MCF 10A (cell line): ENCODE measurements at regions of chr16 and their contacts with region 1.

Region 1: DNA sequence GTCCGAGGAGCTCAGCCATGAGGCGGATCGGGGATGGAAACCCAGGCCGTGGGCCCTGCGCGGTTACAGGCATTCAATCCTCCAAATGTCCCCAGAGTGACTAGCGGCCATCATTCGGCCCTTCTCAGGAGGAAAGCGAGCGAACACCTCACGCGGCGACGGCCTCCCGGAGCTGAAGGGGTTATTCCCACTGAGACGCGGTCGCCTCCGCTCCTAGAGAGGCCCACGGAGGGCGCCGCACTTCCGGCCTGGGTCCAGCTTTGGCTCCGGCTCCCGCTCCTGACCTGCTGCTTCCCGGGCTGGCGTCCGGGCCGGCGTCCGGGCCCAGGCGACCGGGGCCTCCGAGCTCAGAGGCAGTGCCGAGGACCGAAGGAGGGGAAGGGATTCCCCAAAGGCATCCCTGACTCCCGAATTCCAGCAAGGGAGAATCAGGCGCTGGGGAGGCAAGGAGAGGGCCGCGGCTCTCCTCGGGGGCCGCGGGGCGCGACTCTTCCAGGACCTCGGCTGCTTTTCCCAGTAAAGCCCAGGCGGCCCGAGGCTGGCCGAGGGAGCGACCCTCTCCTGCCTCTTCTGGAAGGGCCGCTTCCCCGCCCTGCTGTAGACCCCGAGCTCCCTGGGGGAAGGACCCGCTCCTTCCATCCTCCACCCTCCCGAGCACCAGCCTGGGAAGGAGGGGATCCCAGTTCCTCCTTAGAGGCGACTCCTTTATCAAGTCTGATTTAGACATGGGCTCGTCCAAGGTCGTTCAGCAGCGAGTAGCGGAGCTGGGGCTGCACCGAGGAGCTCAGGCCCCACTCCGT is 18.6 kb upstream of the ZNF629 start:
- DNase-seq: peak; percentile 81
- H3K4me3 Mint-ChIP-seq: peak overlapping the region; percentile 85
- H3K27ac Mint-ChIP-seq: peak overlapping the region; percentile 82
- H3K4me1 Mint-ChIP-seq: peaks cover 10% of the 10 kb centered on the region
- H3K27me3 Mint-ChIP-seq: no peaks in the 10 kb centered on the region
- CTCF ChIP-seq: no peak

Region 2: DNA sequence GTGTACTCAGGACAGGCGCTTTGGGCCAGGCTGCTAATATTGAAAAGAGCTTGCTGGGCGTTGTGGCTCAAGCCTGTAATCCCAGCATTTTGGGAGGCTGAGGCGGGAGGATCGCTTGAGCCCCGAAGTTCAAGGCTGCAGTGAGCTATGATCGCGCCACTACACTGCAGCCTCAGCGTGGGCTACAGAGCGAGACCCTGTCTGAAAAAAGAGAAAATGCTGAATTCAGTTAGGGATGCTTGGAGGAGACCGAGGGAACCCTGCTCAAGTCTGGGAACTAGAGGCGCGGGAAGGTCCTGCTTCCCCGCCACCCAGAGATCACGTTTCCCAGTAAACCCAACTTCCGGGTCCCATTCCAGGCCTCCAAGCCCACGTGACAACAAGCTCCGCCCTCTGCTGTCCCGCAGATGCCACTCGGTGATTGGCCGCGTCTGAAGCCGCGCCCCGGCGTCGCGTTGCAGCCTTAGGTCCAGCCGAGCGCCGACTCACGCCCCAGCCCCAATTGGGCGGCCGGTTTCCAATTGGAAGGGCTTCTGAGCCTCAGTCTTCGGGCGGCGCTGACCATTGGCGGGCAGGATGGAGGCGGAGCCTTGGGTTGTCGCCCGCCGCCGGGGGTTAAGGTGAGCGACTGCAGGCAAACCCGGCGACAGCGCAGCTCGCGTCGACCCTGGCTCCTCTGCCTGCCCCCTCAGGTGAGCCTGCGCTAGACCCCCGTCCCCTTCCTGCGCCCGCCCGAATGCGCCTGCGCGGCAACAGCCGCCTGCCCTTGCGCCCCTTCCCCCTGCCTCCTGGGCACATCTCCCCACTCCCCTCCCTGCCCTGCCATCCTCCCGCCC is 57.6 kb before region 1 on chr16 and contains the start of gene PHKG2:
- CTCF ChIA-PET with region 1: no interaction called
- POLR2A ChIA-PET with region 1: interaction called, 17 read pairs
- intact Hi-C with region 1: no loop called
- DNase-seq: peak; percentile 99
- H3K4me3 Mint-ChIP-seq: peak within 1 kb of the TSS; percentile 87
- H3K27ac Mint-ChIP-seq: peak within 1 kb of the TSS; percentile 86
- H3K4me1 Mint-ChIP-seq: peaks cover 30% of the 10 kb centered on the region
- H3K27me3 Mint-ChIP-seq: no peaks in the 10 kb centered on the region
- CTCF ChIP-seq: no peak
- total RNA-seq, gene PHKG2: 28.0 and 28.4 TPM in 2 replicates

Region 3: DNA sequence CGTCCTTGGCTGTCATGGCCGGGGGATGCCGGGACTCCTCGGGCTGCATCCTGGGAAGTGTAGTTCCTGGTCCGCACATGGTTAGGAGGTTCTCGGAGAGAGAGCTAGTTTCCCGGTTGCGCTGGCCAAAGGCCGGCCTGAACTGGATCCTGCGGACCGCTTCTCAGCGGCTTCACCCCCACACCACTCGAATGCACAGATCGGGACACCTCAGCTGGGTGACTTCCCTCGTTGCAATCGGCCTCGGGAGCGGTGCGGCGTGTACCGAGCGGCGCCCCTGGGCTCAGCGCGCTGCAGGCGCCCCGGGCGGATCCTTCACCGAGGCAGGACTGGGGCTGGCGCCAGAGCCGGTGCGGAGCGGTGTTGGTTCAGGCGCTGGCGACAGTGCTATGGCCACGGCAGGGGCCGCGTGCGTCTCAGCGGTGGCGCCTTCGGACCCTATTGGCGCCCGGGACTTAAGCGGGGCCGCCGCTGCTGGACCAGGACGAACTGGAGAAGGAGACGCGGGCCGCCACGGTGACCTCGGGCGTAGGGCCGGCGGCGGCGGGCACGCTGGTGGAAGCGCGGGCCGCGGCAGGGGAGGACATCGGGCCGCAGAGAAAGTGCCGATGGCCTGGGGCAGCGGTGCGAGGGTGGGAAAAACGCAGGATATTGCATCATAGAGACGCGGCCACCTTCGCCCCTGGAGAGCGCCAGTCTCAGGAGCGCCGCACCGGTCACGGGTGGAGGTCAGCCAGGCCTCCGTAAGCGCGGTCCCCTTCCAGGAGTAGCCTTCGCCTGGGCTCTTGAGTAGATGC is 30.0 kb before region 1 on chr16:
- CTCF ChIA-PET with region 1: interaction called, 4 read pairs
- POLR2A ChIA-PET with region 1: interaction called, 11 read pairs
- intact Hi-C with region 1: loop called (anchors 5 kb)
- DNase-seq: peak; percentile 87
- H3K4me3 Mint-ChIP-seq: peak overlapping the region; percentile 85
- H3K27ac Mint-ChIP-seq: peak overlapping the region; percentile 82
- H3K4me1 Mint-ChIP-seq: peaks cover 22% of the 10 kb centered on the region
- H3K27me3 Mint-ChIP-seq: no peaks in the 10 kb centered on the region
- CTCF ChIP-seq: no peak

Region 4: DNA sequence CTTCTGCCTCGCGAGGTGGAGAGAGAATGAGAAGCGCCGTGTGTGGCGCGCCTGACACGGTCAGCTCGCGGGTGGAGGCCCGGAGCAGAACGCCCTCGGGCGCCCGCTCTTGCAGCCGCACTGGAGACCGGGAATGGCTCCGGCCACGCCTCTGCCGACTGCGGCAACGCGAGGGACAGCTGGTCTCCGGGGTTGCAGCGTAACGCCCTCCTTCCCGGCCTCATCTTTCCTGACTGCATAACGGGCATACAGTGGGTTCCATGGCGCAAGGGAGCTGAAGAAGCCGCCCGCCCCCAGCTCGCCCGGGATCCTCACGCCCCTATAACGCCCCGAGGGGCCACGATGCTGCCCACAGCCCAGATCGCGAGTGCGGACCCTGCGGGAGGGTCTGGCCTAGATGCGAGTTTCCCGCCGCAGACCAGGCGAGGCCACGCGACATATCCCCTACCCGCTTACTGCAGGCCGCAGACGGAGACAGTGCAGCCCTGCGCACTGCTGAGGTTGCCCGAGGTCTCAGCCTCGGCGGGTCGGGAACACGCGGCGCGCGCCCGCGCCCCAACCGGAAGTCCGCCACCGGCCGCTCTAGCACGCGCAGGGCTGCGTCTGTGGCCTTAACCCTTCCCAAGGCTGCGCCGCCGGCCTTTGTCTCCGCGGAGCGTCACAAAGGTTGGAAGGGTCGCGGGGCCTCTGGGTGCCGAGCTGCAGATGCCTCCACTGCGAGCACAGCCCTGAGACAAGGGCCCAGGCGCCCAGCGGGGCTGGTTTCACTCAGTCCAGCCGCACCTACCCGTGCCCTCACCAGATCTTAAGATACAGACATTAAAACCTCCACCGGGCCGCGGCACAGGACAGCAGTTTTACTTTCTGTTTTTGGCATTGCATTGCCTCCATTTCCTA is 69.5 kb after region 1 on chr16:
- CTCF ChIA-PET with region 1: interaction called, 3 read pairs
- POLR2A ChIA-PET with region 1: interaction called, 43 read pairs
- intact Hi-C with region 1: no loop called
- DNase-seq: peak; percentile 85
- H3K4me3 Mint-ChIP-seq: peak overlapping the region; percentile 91
- H3K27ac Mint-ChIP-seq: peak overlapping the region; percentile 72
- H3K4me1 Mint-ChIP-seq: peaks cover 12% of the 10 kb centered on the region
- H3K27me3 Mint-ChIP-seq: no peaks in the 10 kb centered on the region
- CTCF ChIP-seq: no peak

Region 5: GRCh38 chr16:30948667-30949649 is 143.4 kb after region 1 on chr16 and contains the start of gene ORAI3:
- CTCF ChIA-PET with region 1: interaction called, 3 read pairs
- POLR2A ChIA-PET with region 1: interaction called, 14 read pairs
- intact Hi-C with region 1: no loop called
- DNase-seq: peak; percentile 70
- H3K4me3 Mint-ChIP-seq: peak within 1 kb of the TSS; percentile 94
- H3K27ac Mint-ChIP-seq: peak within 1 kb of the TSS; percentile 87
- H3K4me1 Mint-ChIP-seq: no peaks in the 10 kb centered on the region
- H3K27me3 Mint-ChIP-seq: no peaks in the 10 kb centered on the region
- CTCF ChIP-seq: no peak
- total RNA-seq, gene ORAI3: 16.2 and 21.2 TPM in 2 replicates

Region 6: GRCh38 chr16:31044190-31044481 is 238.6 kb after region 1 on chr16:
- CTCF ChIA-PET with region 1: no interaction called
- POLR2A ChIA-PET with region 1: no interaction called
- intact Hi-C with region 1: no loop called
- DNase-seq: no peak
- H3K4me3 Mint-ChIP-seq: no peak overlapping the region
- H3K27ac Mint-ChIP-seq: no peak overlapping the region
- H3K4me1 Mint-ChIP-seq: no peaks in the 10 kb centered on the region
- H3K27me3 Mint-ChIP-seq: no peaks in the 10 kb centered on the region
- CTCF ChIP-seq: no peak